ENCODE measurements at regions of chr9 and their contacts with region 1.

Region 1: GRCh38 chr9:96449845-96450612 is at the start of gene HABP4:
- DNase-seq: peak; percentile 97
- H3K4me3 ChIP-seq: peak within 1 kb of the TSS; percentile 57 to 88 (median 70)
- H3K27ac ChIP-seq: peak within 1 kb of the TSS; percentile 84 to 94 (median 92)
- H3K4me1 ChIP-seq: peaks cover 0 to 20% (median 12%) of the 10 kb centered on the region in 4 donors
- H3K27me3 ChIP-seq: peaks cover 19% of the 10 kb centered on the region
- CTCF ChIP-seq: no peak
- EP300 ChIP-seq: no peak
- POLR2A ChIP-seq: peak; percentile 50
- total RNA-seq, gene HABP4: 1.9 to 11.3 (median 5.0) TPM

Region 2: DNA sequence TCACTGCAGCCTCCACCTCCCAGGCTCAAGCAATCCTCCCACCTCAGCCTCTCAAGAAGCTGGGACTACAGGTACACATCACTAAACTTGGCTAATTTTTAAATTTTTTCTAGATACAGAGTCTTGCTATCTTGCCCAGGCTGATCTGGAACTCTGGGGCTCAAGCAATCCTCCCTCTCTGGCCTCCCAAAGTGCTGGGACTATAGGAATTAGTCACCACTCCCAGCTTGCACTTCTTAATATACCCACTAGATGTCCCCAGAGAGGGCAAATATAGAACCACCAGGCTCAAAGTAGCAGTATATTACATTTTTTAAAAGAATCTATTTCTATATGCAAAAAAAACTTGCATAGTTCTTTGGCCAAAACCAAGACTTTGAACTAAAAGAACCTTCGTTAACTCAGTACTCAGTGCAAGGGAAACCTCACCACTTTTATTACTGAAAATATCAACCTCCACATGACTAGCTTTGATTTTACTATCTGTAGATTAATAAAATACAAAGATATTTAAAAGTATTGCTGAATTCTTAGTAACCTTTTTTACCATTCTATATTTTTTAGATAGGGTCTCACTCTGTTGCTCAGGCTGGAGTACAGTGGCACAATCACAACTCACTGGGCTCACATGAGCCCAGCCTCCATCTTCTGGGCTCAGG is 122.2 kb before region 1 on chr9:
- in situ Hi-C with region 1: loop called in 1 of 4 experiments (anchors 10 kb)
- intact Hi-C with region 1: no loop called
- DNase-seq: peak; percentile 27
- H3K4me3 ChIP-seq: no peak overlapping the region
- H3K27ac ChIP-seq: no peak overlapping the region
- H3K4me1 ChIP-seq: no peaks in the 10 kb centered on the region
- H3K27me3 ChIP-seq: no peaks in the 10 kb centered on the region
- CTCF ChIP-seq: peak; percentile 79 to 95 (median 90)
- EP300 ChIP-seq: no peak
- POLR2A ChIP-seq: no peak

Region 3: DNA sequence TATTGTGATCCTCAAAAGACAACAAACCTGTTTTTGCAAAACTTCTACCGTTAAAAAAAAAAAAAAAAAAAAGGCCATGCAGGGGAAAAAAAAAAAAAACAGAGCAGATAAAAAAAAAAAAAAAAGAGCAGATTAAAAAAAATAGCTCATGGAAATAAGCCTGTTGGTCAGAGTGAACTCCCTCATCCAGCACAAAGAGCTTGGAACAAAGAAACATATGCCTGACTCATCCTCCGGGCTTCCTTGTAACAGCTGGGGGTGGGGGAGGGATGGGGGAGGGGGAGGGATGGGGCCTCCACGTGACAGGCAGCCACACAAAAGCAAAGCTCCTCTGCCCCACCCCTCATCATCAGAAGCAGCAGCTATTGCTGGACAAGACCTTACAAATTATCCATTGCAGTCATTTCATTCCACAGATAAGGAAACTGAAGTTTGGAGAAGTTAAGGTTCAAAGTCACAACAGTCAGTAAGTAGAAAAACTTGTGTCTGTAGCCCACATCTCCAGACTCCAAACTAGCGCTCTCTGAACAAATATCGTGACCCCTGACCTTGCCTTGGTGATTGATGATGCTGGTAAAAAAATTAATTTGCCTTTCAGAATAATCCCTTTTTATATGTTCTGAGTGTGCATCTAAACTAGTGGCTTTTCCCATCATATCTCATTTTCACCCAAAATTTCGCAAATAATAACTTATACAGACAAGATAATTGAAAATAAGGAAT is 105.4 kb before region 1 on chr9:
- in situ Hi-C with region 1: no loop called
- intact Hi-C with region 1: loop called (anchors 10 kb)
- DNase-seq: peak; percentile 48
- H3K4me3 ChIP-seq: no peak overlapping the region
- H3K27ac ChIP-seq: peak overlapping the region; percentile 27 to 72 (median 62)
- H3K4me1 ChIP-seq: peaks cover 0 to 22% (median 16%) of the 10 kb centered on the region in 4 donors
- H3K27me3 ChIP-seq: no peaks in the 10 kb centered on the region
- CTCF ChIP-seq: no peak
- EP300 ChIP-seq: no peak
- POLR2A ChIP-seq: no peak

Region 4: DNA sequence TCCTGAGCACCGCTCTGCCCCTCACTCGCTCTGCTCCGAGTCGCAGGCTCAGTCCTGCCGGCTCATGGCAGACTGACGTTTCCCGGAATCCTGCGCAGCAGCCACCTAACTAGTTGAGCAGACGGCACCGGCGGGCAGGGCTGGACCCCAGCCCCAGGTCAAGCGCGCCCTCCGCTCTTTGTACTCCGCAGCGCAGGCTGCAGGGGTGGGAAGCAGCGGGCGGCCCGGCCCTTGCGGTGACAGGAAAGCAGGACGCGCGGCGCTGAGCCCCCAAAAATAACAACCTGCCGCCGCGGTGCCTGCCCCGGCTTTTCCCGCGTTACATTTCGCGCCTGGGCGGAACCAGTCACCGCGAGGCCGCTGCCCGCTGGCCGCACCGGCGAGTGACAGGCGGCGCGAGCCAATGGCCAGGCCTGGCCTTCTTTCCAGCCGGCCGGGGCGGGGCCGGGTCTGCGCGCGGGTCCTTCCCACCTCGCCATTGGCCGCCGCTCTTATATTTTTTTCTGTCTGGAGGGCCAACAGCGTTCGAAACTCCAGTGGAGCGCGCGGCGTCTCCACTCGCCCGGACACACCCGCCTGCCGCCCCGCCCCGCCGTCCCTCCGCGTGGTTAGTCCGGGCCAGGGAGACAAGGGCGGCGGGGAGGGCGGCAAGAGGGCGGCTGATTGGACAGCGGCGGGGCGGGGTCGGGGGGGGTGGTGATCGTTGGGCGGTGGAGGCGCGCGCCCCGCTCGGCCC is 31.8 kb before region 1 on chr9 and contains the start of gene ZNF367:
- in situ Hi-C with region 1: no loop called
- intact Hi-C with region 1: loop called (anchors 1 kb)
- DNase-seq: peak; percentile 98
- H3K4me3 ChIP-seq: peak within 1 kb of the TSS; percentile 67 to 85 (median 72)
- H3K27ac ChIP-seq: peak within 1 kb of the TSS; percentile 99
- H3K4me1 ChIP-seq: peaks cover 16 to 44% (median 30%) of the 10 kb centered on the region in 4 donors
- H3K27me3 ChIP-seq: no peaks in the 10 kb centered on the region
- CTCF ChIP-seq: no peak
- EP300 ChIP-seq: no peak
- POLR2A ChIP-seq: peak; percentile 5
- total RNA-seq, gene ZNF367: 1.2 to 2.1 (median 1.4) TPM in 3 of 4 donors, not detected in the other

Region 5: DNA sequence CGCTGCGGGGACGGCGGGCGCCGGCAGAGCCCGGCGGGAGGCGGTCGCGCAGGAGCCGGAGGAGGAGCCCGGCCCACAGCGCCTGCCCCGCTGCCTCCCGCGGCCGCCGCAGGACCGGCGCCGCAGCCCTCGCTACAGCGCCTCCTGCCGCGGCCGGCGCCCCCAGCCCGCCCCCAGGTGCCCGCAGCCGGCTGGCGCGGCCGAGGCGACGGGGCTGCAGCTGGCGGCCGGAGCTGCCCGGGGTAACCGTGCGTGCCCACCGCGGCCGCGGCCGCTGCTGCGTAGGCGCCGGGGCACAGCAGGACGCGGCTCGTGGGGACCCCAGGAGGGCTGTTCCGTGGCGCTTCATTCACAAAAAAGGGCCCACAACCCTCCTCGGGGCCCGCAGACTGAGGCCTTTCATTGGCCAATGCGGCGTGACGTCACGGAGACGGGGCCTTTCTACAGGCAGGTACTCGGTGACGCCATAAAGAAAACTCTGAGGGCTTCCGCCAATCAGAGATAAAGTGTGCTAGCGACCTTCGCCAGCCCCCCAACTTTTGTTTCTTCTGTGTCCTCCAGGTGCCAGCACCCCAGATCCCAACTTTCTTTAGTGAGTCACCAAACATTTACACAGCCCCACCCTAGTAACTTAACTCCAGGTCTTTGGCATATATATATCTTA is 169.6 kb after region 1 on chr9 and contains the start of gene CDC14B:
- in situ Hi-C with region 1: loop called in 1 of 4 experiments (anchors 10 kb)
- intact Hi-C with region 1: loop called (anchors 10 kb)
- DNase-seq: peak; percentile 94
- H3K4me3 ChIP-seq: peak within 1 kb of the TSS; percentile 71 to 90 (median 84)
- H3K27ac ChIP-seq: peak within 1 kb of the TSS; percentile 74 to 81 (median 80)
- H3K4me1 ChIP-seq: peaks cover 0 to 14% (median 9%) of the 10 kb centered on the region in 4 donors
- H3K27me3 ChIP-seq: peaks cover 13% of the 10 kb centered on the region
- CTCF ChIP-seq: no peak
- EP300 ChIP-seq: no peak
- POLR2A ChIP-seq: no peak
- total RNA-seq, gene CDC14B: 18.0 to 22.3 (median 20.9) TPM

Region 6: GRCh38 chr9:96636368-96636767 is 186.3 kb after region 1 on chr9:
- in situ Hi-C with region 1: no loop called
- intact Hi-C with region 1: no loop called
- DNase-seq: no peak
- H3K4me3 ChIP-seq: no peak overlapping the region
- H3K27ac ChIP-seq: no peak overlapping the region
- H3K4me1 ChIP-seq: no peaks in the 10 kb centered on the region
- H3K27me3 ChIP-seq: peaks cover 8% of the 10 kb centered on the region
- CTCF ChIP-seq: no peak
- EP300 ChIP-seq: no peak
- POLR2A ChIP-seq: no peak

Region 7: DNA sequence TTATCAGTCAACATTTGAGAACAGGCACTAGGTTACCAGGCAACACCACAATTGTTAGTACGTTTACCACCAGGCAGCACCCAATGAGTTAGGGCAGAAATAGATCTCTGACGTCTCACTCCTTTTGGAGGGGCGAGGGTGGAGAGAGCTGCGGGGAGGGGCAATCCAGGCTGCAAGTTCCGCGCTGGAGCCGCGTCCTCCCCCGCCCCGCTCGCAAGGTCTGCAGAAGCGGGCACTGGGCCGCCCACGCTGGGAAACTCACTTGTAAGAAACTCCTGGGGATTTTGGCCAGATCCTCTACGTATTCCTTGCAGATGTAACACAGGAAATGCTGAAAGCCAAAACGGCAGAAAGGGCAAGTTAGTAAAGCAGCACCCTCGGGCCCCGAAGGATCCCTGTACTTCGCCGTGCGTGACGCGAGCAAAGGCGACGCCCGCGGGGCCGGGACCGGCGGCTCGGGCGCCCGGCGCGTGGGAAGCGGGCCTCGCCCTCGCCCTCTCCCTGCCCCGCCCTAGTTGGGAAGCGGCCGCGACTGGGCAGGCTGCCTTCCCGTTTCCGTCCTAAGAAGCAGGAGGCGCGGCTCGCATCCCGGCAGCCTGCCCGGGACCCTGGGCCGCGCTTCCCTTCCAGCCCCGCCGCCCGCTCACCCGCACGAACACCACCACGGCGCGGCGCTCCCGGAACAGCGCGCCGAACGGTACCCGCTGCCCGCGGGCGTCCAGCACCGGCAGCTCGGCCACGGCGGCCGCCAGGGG is 204.6 kb after region 1 on chr9:
- in situ Hi-C with region 1: loop called in 2 of 4 experiments (anchors 10 kb)
- intact Hi-C with region 1: loop called (anchors 10 kb)
- DNase-seq: peak; percentile 81
- H3K4me3 ChIP-seq: peak overlapping the region; percentile 63 to 76 (median 65)
- H3K27ac ChIP-seq: peak overlapping the region; percentile 94 to 96 (median 96)
- H3K4me1 ChIP-seq: peaks cover 6 to 18% (median 10%) of the 10 kb centered on the region in 4 donors
- H3K27me3 ChIP-seq: no peaks in the 10 kb centered on the region
- CTCF ChIP-seq: peak in 1 of 5 experiments; percentile 14
- EP300 ChIP-seq: no peak
- POLR2A ChIP-seq: peak; percentile 38

Region 8: GRCh38 chr9:96661711-96662110 is 211.7 kb after region 1 on chr9:
- in situ Hi-C with region 1: loop called in 3 of 4 experiments (anchors 10 kb)
- intact Hi-C with region 1: loop called (anchors 10 kb)
- DNase-seq: no peak
- H3K4me3 ChIP-seq: no peak overlapping the region
- H3K27ac ChIP-seq: no peak overlapping the region
- H3K4me1 ChIP-seq: peaks cover 0 to 2% (median 0%) of the 10 kb centered on the region in 4 donors
- H3K27me3 ChIP-seq: no peaks in the 10 kb centered on the region
- CTCF ChIP-seq: no peak
- EP300 ChIP-seq: no peak
- POLR2A ChIP-seq: no peak